ENCODE measurements at regions of chr11 and their contacts with region 1.

Region 1: DNA sequence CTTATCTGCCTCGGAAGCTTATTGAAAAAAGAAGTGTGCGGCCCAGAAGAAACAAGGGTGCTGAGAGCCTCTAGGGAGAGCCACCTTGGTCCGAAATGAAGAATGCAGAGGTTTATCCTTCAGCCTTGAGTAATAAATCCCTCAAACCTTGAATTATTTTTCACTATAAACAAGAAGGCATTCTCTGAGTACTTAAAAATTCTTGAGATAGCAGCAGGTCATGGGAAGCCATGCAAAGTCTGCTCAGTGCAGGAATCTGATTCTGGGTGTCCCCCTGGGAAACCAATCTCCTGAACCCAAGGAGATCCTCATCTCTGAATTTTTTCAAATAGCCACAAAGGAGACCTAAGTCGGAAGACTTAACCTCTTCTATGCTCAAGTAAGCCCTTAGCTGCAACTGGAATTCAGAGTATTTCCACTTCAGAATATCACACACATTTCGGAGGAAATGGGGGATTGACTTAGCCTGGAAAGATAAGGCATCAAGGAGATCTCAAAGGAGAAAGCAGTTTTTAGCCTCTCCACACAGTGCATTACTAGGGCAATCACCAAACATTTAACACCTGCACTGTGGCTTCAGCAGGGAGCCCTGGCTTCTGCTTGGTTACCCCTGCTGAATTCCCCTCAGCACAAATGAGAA is 365.0 kb downstream of the ETS1 start:
- DNase-seq: no peak
- H3K4me3 ChIP-seq: no peak overlapping the region
- H3K27ac ChIP-seq: no peak overlapping the region
- H3K4me1 ChIP-seq: peaks cover 2% of the 10 kb centered on the region
- H3K27me3 ChIP-seq: no peaks in the 10 kb centered on the region
- CTCF ChIP-seq: no peak

Region 2: DNA sequence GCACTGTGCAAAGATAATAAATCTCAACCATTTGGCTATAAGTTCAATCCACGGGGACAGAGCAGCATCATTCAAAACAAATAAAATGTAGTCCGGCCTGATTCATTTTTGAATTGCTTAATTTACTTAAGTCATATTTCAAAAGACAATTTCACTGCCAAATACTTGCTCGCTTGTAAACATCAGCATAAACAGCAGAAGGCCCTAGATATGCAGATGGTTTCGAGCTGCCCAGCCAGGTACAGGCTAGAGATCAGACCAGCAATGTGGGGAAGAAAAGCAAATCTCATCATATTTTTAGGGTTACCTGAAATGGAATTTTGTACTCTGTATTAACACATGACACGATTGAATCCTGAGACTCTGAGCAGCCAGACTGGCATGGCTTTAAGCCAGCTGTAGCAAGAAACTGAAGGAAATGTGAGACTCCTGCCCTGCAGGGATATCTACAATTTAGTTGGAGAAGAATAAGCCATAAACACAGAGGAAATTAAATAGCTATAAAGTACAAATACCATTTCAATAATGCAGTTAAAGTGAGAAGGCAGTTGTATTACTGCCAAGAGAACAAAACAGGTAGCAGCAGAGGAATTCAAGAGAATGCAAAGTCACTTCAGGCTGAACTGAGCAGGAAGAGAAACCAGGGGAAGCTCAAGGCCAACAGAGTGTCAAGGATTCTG is 75.3 kb before region 1 on chr11:
- CTCF ChIA-PET with region 1: no interaction called
- dilution Hi-C with region 1: no loop called
- in situ Hi-C with region 1: no loop called
- intact Hi-C with region 1: no loop called
- DNase-seq: peak; percentile 46
- H3K4me3 ChIP-seq: no peak overlapping the region
- H3K27ac ChIP-seq: peak overlapping the region; percentile 14
- H3K4me1 ChIP-seq: peaks cover 13% of the 10 kb centered on the region
- H3K27me3 ChIP-seq: no peaks in the 10 kb centered on the region
- CTCF ChIP-seq: no peak

Region 3: DNA sequence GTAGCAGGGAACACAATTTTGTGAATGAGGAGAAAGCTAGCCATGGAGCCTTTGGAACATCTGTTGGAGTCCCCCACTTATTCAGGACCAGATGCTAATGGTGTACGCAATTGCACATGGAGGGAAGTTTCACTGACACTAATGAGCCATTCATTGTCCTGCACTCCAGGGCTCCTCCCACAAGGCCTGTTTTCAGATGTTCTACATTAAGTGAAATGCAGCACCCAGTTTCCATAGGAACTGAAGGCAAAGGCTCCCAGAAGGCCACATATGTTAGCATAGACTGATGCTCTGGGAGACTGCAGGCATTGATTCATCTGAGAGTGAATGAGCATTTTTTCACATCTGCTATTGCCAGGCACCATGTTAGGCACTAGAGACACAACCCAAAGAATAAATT is 34.5 kb before region 1 on chr11:
- CTCF ChIA-PET with region 1: no interaction called
- dilution Hi-C with region 1: loop called (anchors 5 kb)
- in situ Hi-C with region 1: no loop called
- intact Hi-C with region 1: no loop called
- DNase-seq: no peak
- H3K4me3 ChIP-seq: no peak overlapping the region
- H3K27ac ChIP-seq: no peak overlapping the region
- H3K4me1 ChIP-seq: peaks cover 6% of the 10 kb centered on the region
- H3K27me3 ChIP-seq: no peaks in the 10 kb centered on the region
- CTCF ChIP-seq: no peak

Region 4: GRCh38 chr11:128323381-128323780 is 101.0 kb after region 1 on chr11:
- CTCF ChIA-PET with region 1: no interaction called
- dilution Hi-C with region 1: no loop called
- in situ Hi-C with region 1: no loop called
- intact Hi-C with region 1: no loop called
- DNase-seq: no peak
- H3K4me3 ChIP-seq: no peak overlapping the region
- H3K27ac ChIP-seq: no peak overlapping the region
- H3K4me1 ChIP-seq: no peaks in the 10 kb centered on the region
- H3K27me3 ChIP-seq: peaks cover 3% of the 10 kb centered on the region
- CTCF ChIP-seq: peak; percentile 10 to 37

Region 5: DNA sequence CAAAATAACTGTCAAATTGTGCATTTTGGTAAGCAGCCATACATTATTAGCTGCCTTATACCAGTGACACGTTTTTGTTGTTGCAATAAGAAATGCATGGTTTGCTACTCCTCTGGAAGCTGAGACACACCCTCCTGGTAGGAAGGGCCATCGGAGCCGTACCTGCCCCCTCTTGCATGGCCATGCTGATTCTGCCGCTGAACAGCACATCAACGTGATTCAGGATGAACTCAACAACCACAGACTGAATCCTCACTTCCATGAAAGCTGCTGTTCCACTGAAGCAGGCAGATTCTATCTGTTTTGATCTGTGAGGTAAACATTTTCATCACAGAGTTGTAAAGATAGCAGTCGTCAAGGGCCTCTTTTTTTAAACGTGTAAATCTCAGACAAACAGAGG is 758.9 kb after region 1 on chr11:
- CTCF ChIA-PET with region 1: no interaction called
- dilution Hi-C with region 1: no loop called
- in situ Hi-C with region 1: no loop called
- intact Hi-C with region 1: no loop called
- DNase-seq: peak; percentile 55
- H3K4me3 ChIP-seq: no peak overlapping the region
- H3K27ac ChIP-seq: no peak overlapping the region
- H3K4me1 ChIP-seq: no peaks in the 10 kb centered on the region
- H3K27me3 ChIP-seq: no peaks in the 10 kb centered on the region
- CTCF ChIP-seq: no peak

Measured in mammary epithelial cell (primary cell).